HEK293T (cell line): ENCODE measurements at regions of chr15 and their contacts with region 1.

Region 1: DNA sequence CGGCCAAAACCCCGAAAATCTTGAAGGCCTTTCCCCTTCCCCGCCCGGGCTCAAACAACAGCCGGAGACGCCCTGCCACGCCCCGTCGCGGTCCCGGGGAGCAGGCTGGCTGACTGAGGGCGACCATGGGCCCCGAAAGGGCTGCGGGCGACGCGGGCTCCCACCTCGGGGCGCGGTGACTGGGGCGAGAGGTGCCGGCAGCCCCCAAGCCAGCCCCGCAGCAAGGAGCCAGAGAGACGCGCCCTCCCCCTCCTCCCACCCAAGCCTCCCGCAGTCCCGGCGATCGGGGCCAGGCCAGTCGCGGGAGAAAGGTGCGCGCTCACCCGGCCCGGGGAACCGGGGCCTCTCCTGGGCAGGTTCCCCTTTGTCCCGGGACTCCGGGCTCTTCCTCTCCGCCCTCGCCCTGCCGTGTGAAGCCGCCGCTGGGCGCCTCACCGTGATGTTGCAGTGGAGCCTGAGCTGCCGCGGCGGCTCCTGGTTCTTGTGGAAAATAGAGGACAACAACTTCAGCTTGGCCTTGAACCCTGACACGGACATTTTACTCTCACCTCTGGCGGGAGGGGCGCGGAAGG is 30.6 kb upstream of the ZSCAN2 start:
- DNase-seq: peak; percentile 25

Region 2: DNA sequence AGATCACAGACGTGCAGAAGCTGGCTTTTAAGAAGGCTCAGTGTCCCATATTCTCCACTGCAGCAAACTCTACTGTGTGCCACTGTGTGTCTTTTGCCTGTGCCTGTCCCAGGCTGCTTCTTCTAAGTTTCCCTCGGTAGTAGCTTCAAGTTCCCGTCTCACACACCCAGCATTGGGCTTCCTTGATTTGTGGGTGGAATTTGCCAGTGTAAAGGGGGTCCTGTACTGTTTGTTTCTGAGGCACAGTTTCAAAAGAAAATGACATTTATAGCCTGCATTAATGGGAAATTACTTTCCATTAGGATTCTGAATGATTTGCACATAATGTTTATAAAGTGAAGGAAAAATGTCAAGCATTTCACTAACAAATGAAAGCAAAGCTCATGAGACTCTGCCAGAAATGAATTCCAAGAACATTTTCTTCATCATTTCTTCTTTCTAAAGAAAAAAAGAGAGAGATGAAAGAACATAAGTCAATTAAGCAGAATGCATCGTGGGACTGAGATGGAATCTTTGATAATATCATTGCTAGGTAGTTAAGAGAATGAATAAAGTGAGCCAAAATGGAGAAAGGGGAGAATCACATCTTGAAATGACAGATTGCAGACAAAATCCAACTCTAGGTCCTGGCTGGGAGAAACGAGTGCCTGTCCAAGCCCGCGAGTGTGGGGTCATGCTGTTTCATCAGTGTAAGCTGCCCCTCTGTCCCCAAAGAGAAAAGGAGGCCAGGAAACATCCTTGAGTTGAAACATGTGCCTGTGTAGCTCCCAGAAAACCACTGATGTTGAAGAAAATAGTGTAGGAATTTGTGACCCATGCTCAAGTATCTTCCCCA is 964.9 kb before region 1 on chr15:
- CTCF ChIA-PET with region 1: no interaction called
- POLR2A ChIA-PET with region 1: no interaction called
- DNase-seq: no peak

Region 3: GRCh38 chr15:84582583-84583157 is 12.4 kb after region 1 on chr15:
- CTCF ChIA-PET with region 1: interaction called, 18 read pairs
- POLR2A ChIA-PET with region 1: interaction called, 7 read pairs
- DNase-seq: no peak

Region 4: GRCh38 chr15:84588053-84588874 is 18.0 kb after region 1 on chr15:
- CTCF ChIA-PET with region 1: interaction called, 13 read pairs
- POLR2A ChIA-PET with region 1: interaction called, 7 read pairs
- DNase-seq: peak; percentile 96

Region 5: DNA sequence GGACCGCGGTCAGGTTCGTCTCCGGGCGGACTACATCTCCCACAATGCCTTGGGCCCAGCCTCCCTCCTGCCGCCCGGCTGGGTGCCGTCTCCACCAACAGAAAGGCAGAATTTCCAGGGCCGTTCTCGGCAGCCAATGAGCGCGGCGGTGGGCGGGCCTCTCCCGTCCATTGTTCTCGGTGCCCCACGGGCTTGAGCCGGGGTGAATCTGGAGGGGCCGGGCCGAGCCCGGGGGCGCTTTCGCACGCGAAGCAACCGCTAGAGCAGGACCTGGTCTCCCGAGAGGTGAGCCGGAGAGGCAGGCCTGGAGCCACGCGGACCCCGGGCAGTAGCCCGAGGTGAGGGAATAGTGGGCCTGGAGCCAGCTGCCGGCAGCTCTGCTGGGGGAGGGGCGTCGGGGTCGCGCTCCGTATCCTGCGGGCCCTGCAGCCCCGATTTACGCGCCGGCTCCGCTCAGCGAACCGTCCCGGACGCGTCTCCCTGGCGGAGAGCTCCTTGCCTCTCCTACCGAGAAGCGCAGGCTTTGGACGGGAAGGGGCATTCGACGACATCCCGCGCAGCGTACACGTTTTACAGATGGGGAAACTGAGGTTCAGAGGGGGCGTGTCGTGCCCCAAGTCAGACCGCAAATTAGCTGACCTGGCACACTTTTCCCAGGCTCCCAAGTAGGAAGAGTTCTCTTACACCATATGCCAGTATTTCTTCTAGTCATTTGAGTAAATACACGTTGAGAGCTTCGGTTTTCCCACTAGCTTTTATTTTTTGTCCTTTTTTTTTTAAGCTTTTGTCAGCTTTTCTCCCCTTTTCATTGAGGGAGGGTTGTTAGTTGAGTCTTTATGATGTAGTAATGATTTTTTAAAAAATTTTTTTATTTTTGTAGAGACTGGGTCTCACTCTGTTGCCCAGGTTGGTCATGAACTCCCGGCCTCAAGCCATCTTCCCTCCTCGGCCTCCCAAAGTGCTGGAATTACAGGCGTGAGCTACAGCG is 30.9 kb after region 1 on chr15 and contains the start of gene ZSCAN2:
- CTCF ChIA-PET with region 1: interaction called, 10 read pairs
- POLR2A ChIA-PET with region 1: interaction called, 6 read pairs
- DNase-seq: peak; percentile 96